Common myeloid progenitor, CD34-positive (primary cell): ENCODE measurements at regions of chr2 and their contacts with region 1.

Region 1: GRCh38 chr2:157443795-157444640 is at the start of gene CYTIP:
- DNase-seq: peak; percentile 67 to 89 (median 86)
- H3K4me3 ChIP-seq: peak within 1 kb of the TSS; percentile 27 to 98 (median 81)
- H3K27ac ChIP-seq: peak within 1 kb of the TSS; percentile 73 to 82
- H3K4me1 ChIP-seq: peaks cover 34 to 52% (median 41%) of the 10 kb centered on the region in 4 experiments
- H3K27me3 ChIP-seq: no peaks in the 10 kb centered on the region

Region 2: DNA sequence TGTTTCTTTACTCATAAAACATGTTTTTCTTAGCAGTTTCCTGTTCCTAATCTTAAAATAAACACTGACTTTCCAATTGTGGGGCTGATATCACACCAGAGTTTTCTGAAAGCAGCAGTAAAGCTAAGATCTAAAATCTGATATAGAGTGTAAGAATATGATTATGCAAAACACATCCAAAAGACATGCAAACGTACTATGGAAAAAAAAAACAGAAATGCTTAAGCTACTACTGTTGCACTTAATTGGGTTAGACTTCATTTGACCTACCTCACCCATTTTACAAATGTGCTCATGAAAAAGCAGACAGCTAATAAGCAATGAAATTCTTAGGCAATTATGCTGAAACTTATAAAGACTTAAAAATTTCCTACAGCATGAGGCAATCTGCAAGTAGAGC is 10.6 kb before region 1 on chr2:
- CTCF ChIA-PET with region 1: interaction called, 10 read pairs
- POLR2A ChIA-PET with region 1: no interaction called
- DNase-seq: no peak
- H3K4me3 ChIP-seq: peak overlapping the region in 3 of 7 experiments; percentile 18 to 37 (median 25)
- H3K27ac ChIP-seq: peak overlapping the region; percentile 1 to 43
- H3K4me1 ChIP-seq: peaks cover 29 to 49% (median 35%) of the 10 kb centered on the region in 4 experiments
- H3K27me3 ChIP-seq: no peaks in the 10 kb centered on the region

Region 3: GRCh38 chr2:158034199-158034866 is 590.3 kb after region 1 on chr2:
- CTCF ChIA-PET with region 1: no interaction called
- POLR2A ChIA-PET with region 1: no interaction called
- DNase-seq: peak; percentile 63 to 87 (median 78)
- H3K4me3 ChIP-seq: no peak overlapping the region
- H3K27ac ChIP-seq: no peak overlapping the region
- H3K4me1 ChIP-seq: no peaks in the 10 kb centered on the region
- H3K27me3 ChIP-seq: no peaks in the 10 kb centered on the region